GM13977 (cell line): ENCODE measurements at regions of chr12 and their contacts with region 1.

Region 1: DNA sequence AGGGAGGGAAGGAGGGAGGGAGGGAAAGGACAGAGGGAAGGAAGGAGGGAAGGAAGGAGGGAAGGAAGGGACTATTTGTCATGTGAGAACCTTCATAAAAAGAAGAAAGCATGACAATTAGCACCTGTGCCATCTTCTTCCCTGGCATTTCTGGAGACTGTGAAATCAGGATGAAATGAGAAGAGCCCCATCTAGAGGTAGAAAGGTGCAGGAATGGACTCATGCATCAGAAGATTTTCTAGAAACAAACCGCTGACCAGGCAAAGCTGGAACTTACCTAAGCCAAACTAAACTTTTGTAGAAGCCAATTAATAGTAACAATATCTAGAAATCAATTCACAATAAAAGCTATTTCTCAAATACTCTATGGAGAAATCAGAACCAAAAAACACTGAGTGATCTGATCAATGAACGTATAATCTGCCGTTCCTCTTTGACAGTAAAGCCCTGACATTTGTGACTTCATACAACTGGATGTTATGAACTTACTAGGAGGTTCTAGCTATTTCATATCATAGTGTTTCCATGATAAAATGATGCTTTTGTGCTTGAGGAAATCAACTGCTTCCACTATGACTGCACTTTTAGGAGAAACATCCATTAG is 24.4 kb upstream of the CRACR2A start:
- DNase-seq: peak; percentile 56
- CTCF ChIP-seq: peak; percentile 69

Region 2: DNA sequence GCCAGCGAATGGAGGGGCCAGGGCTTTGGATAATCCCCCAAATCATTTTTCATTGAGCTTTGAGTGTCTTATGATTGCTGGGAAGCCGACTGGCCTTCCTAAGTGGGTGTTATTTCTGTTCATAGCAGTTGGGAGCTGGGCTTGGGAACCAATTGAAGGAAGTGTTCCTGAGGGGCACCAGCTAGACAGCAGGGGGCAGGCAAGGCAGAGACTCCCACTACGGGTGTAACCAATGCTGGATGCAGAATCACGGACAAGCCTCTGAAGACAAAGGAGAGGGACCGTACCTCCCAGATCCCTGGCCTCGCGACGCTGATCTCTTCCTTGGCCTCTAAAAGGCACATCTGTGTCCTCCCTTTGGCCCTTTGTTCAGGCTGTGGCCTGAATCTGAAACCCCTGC is 435.3 kb before region 1 on chr12:
- in situ Hi-C with region 1: loop called (anchors 25 kb)
- DNase-seq: peak; percentile 47
- CTCF ChIP-seq: peak; percentile 33

Region 3: GRCh38 chr12:3964439-3964838 is 187.1 kb after region 1 on chr12:
- in situ Hi-C with region 1: no loop called
- DNase-seq: peak; percentile 65
- CTCF ChIP-seq: peak; percentile 65

Region 4: GRCh38 chr12:4215229-4216186 is 438.2 kb after region 1 on chr12:
- in situ Hi-C with region 1: no loop called
- DNase-seq: peak; percentile 70
- CTCF ChIP-seq: no peak